Activated naive CD4-positive, alpha-beta T cell treated with anti-CD3 and anti-CD28 coated beads, Interleukin-2, amount 10 ng/mL, durations not matched to agents 7 days and 5 days (primary cell): ENCODE measurements at regions of chr15 and their contacts with region 1.

Region 1: DNA sequence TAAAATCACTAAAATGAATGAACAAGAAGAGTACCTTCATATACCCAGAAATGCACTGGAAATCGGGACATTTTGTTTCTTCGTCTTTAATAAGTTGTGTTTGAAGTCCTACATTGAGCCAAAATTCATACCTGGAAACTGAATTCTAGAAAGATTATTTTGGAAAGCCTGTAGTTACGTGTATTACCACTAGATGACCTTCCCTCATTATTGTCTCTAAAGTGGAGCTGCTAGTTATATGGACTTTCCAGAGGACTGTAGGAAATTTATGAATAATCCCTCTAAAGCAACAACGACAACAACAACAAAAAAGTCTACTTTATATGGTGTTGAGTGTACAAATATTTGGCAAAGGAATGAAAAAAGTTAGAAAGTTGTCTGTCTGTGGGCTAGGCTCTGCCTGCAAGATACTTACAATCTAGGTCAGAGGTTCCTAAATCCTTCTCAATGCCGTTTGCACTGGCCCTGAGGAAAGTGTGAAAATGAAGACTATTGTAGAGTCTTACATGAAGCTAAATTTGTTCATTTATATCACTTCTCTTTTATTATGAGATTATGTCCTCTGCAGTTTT is 234.8 kb upstream of the NR2E3 start:
- DNase-seq: no peak
- H3K4me3 Mint-ChIP-seq: no peak overlapping the region
- H3K27ac Mint-ChIP-seq: no peak overlapping the region
- H3K4me1 Mint-ChIP-seq: no peaks in the 10 kb centered on the region
- H3K27me3 Mint-ChIP-seq: peaks cover 10% of the 10 kb centered on the region

Region 2: GRCh38 chr15:71730277-71731144 is 155.0 kb after region 1 on chr15:
- CTCF ChIA-PET with region 1: interaction called, 16 read pairs
- DNase-seq: peak; percentile 36
- H3K4me3 Mint-ChIP-seq: no peak overlapping the region
- H3K27ac Mint-ChIP-seq: no peak overlapping the region
- H3K4me1 Mint-ChIP-seq: no peaks in the 10 kb centered on the region
- H3K27me3 Mint-ChIP-seq: peaks cover 5% of the 10 kb centered on the region